Heart right ventricle (tissue), 16 donors: ENCODE measurements at regions of chr1 and their contacts with region 1.

Region 1: DNA sequence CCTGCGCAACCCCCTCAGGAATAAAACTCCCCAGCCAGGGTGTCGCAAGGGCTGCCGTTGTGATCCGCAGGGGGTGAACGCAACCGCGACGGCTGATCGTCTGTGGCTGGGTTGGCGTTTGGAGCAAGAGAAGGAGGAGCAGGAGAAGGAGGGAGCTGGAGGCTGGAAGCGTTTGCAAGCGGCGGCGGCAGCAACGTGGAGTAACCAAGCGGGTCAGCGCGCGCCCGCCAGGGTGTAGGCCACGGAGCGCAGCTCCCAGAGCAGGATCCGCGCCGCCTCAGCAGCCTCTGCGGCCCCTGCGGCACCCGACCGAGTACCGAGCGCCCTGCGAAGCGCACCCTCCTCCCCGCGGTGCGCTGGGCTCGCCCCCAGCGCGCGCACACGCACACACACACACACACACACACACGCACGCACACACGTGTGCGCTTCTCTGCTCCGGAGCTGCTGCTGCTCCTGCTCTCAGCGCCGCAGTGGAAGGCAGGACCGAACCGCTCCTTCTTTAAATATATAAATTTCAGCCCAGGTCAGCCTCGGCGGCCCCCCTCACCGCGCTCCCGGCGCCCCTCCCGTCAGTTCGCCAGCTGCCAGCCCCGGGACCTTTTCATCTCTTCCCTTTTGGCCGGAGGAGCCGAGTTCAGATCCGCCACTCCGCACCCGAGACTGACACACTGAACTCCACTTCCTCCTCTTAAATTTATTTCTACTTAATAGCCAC is 696 bp downstream of the TGFB2 start:
- DNase-seq: peak; percentile 53 to 72
- ATAC-seq: peak; percentile 77 to 93 (median 82)
- H3K4me3 ChIP-seq: peak overlapping the region; percentile 65 to 86 (median 70)
- H3K27ac ChIP-seq: peak overlapping the region; percentile 39 to 95 (median 83)
- H3K4me1 ChIP-seq: peaks cover 0 to 46% (median 23%) of the 10 kb centered on the region in 9 donors
- H3K27me3 ChIP-seq: peaks cover 0 to 34% (median 0%) of the 10 kb centered on the region in 7 donors
- CTCF ChIP-seq: peak in 2 of 9 donors; percentile 16 to 22

Region 2: GRCh38 chr1:218171285-218171893 is 174.4 kb before region 1 on chr1:
- intact Hi-C with region 1: no loop called
- DNase-seq: no peak
- ATAC-seq: no peak
- H3K4me3 ChIP-seq: peak overlapping the region in 1 of 10 donors; percentile 15
- H3K27ac ChIP-seq: no peak overlapping the region
- H3K4me1 ChIP-seq: no peaks in the 10 kb centered on the region
- H3K27me3 ChIP-seq: peaks cover 0 to 75% (median 41%) of the 10 kb centered on the region in 7 donors
- CTCF ChIP-seq: peak; percentile 44 to 85 (median 76)

Region 3: GRCh38 chr1:218476380-218476779 is 130.5 kb after region 1 on chr1:
- intact Hi-C with region 1: loop called in 1 of 10 experiments (anchors 5 kb)
- DNase-seq: no peak
- ATAC-seq: peak in 1 of 8 donors; percentile 34
- H3K4me3 ChIP-seq: no peak overlapping the region
- H3K27ac ChIP-seq: peak overlapping the region in 5 of 10 donors; percentile 8 to 81 (median 63)
- H3K4me1 ChIP-seq: peaks cover 0 to 61% (median 40%) of the 10 kb centered on the region in 9 donors
- H3K27me3 ChIP-seq: no peaks in the 10 kb centered on the region
- CTCF ChIP-seq: no peak

Region 4: DNA sequence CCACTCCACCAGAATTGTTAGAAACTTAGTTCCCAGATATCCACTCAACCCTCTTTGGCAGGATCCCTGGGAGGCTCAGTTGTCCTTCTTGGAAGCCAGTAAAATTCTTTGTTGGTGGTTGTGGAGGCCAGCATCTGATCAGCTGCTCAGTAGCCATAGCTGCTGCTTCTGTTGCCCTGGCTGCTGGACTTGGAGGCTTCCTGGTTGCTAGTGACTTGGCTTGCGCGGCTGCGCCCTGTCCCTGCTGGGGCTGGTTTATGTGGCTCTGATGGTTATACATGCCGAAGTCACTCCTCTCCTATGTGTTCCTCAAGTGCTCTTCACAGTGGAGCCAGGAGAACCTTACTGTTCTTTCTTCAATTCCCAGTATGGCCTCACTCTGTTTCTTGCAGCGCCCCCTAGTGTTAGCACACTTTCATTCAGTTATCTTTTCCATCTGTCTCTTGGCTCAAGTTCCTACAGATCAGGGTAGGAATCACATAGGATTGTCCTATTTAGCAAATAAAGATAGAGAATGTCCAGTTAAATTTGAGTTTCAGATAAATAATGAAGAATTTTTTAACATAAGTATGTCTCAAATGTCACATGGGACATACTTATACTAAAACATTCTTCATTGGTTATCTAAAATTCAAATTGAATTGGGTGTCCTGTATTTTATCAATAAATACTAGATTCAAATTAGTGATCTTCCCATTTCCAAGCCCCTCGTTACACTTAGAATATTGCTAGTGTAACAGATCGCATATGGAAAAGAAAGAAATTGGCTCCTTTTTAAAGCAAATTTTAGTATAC is 175.7 kb after region 1 on chr1:
- intact Hi-C with region 1: loop called in 5 of 10 experiments (anchors 5 to 10 kb)
- DNase-seq: peak in 1 of 2 donors; percentile 45
- ATAC-seq: peak in 4 of 8 donors; percentile 24 to 54 (median 34)
- H3K4me3 ChIP-seq: no peak overlapping the region
- H3K27ac ChIP-seq: no peak overlapping the region
- H3K4me1 ChIP-seq: peaks cover 0 to 5% (median 0%) of the 10 kb centered on the region in 9 donors
- H3K27me3 ChIP-seq: no peaks in the 10 kb centered on the region
- CTCF ChIP-seq: peak; percentile 44 to 74 (median 64)

Region 5: GRCh38 chr1:219066631-219067349 is 721.0 kb after region 1 on chr1:
- intact Hi-C with region 1: loop called in 4 of 10 experiments (anchors 5 to 10 kb)
- DNase-seq: peak in 1 of 2 donors; percentile 5
- ATAC-seq: peak in 7 of 8 donors; percentile 50 to 79 (median 71)
- H3K4me3 ChIP-seq: no peak overlapping the region
- H3K27ac ChIP-seq: peak overlapping the region in 2 of 10 donors; percentile 17 to 26
- H3K4me1 ChIP-seq: peaks cover 0 to 11% (median 6%) of the 10 kb centered on the region in 9 donors
- H3K27me3 ChIP-seq: no peaks in the 10 kb centered on the region
- CTCF ChIP-seq: peak; percentile 42 to 73 (median 59)